ENCODE measurements at regions of chr3 and their contacts with region 1.

Region 1: DNA sequence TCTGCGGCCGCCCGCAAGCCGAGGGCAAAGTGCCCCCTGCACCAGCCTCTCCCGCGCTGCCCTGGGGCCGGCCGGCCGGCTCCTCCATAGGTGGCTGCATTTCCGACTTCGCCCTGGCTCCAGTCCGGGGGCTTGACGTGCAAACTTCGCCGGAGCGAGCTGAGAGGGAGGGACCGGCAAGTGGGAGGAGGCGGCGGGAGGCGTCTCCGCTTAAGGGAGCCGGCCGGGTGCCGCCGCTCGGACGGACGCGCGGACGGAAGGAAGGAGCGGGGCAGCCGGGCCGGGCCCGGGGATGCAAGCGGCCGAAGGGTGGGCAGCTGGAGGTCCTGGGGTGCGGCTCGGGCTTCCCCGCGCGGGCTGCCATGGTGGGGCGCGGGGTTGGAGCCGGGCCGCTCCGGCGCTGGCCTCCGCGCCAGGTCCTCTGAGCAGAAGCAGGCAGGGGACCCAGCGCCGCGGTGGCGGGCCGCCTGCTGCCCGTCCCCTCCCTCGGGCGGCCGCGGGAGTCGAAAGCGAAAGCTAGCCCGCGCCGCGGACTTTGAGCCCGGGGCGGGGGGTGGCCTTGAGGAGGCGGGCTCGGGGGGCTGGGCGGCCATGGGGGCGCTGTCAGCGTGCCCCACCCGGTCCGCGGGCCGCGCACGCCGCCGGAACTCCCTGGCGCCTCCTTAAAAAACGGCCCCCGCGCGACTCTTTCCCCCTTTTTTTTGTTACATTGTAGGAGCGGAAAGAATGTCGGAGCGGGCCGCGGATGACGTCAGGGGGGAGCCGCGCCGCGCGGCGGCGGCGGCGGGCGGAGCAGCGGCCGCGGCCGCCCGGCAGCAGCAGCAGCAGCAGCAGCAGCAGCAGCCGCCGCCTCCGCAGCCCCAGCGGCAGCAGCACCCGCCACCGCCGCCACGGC is at the start of gene SCAANT1:
- DNase-seq: peak; percentile 91 to 95
- H3K4me3 ChIP-seq: peak within 1 kb of the TSS; percentile 55
- H3K4me3 Mint-ChIP-seq: peak within 1 kb of the TSS; percentile 94
- H3K27ac Mint-ChIP-seq: peak within 1 kb of the TSS; percentile 90
- H3K4me1 ChIP-seq: peaks cover 10% of the 10 kb centered on the region
- H3K4me1 Mint-ChIP-seq: no peaks in the 10 kb centered on the region
- H3K27me3 ChIP-seq: no peaks in the 10 kb centered on the region
- H3K27me3 Mint-ChIP-seq: no peaks in the 10 kb centered on the region
- CTCF ChIP-seq: no peak
- total RNA-seq, gene SCAANT1: not detected in 2 replicates

Region 2: GRCh38 chr3:63863148-63864007 is 48.7 kb before region 1 on chr3 and contains the starts of genes ATXN7 and THOC7:
- CTCF ChIA-PET with region 1: interaction called, 15 read pairs
- POLR2A ChIA-PET with region 1: interaction called, 3 read pairs
- intact Hi-C with region 1: loop called (anchors 2 kb)
- DNase-seq: peak; percentile 63 to 81
- H3K4me3 ChIP-seq: peak within 1 kb of the TSS; percentile 93
- H3K4me3 Mint-ChIP-seq: peak within 1 kb of the TSS; percentile 73
- H3K27ac Mint-ChIP-seq: peak within 1 kb of the TSS; percentile 64
- H3K4me1 ChIP-seq: peaks cover 23% of the 10 kb centered on the region
- H3K4me1 Mint-ChIP-seq: peaks cover 28% of the 10 kb centered on the region
- H3K27me3 ChIP-seq: no peaks in the 10 kb centered on the region
- H3K27me3 Mint-ChIP-seq: no peaks in the 10 kb centered on the region
- CTCF ChIP-seq: no peak
- total RNA-seq, gene ATXN7: 22.5 and 22.8 TPM in 2 replicates
- total RNA-seq, gene THOC7: 68.4 and 78.3 TPM in 2 replicates

Region 3: DNA sequence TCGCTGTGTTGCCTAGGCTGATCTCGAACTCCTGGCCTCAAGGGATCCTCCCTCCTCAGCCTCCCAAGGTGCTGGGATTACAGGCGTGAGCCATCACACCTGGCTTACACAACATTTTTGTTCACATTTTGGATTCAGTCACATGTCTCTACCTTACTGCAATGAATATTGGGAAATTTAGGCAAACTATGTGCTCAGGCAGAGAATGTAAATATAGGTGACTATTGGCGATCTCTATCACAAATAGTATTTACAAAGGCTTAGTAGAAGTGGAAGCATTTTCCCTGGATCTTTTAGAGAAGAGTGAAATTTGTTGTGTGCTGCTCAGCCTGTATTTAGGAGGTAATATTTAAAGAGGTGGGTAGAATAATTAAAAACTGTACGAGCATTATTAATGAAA is 20.6 kb before region 1 on chr3:
- CTCF ChIA-PET with region 1: no interaction called
- POLR2A ChIA-PET with region 1: no interaction called
- intact Hi-C with region 1: loop called (anchors 1 kb)
- DNase-seq: peak in 1 of 2 experiments; percentile 36
- H3K4me3 ChIP-seq: no peak overlapping the region
- H3K4me3 Mint-ChIP-seq: no peak overlapping the region
- H3K27ac Mint-ChIP-seq: no peak overlapping the region
- H3K4me1 ChIP-seq: no peaks in the 10 kb centered on the region
- H3K4me1 Mint-ChIP-seq: no peaks in the 10 kb centered on the region
- H3K27me3 ChIP-seq: no peaks in the 10 kb centered on the region
- H3K27me3 Mint-ChIP-seq: no peaks in the 10 kb centered on the region
- CTCF ChIP-seq: no peak

Region 4: DNA sequence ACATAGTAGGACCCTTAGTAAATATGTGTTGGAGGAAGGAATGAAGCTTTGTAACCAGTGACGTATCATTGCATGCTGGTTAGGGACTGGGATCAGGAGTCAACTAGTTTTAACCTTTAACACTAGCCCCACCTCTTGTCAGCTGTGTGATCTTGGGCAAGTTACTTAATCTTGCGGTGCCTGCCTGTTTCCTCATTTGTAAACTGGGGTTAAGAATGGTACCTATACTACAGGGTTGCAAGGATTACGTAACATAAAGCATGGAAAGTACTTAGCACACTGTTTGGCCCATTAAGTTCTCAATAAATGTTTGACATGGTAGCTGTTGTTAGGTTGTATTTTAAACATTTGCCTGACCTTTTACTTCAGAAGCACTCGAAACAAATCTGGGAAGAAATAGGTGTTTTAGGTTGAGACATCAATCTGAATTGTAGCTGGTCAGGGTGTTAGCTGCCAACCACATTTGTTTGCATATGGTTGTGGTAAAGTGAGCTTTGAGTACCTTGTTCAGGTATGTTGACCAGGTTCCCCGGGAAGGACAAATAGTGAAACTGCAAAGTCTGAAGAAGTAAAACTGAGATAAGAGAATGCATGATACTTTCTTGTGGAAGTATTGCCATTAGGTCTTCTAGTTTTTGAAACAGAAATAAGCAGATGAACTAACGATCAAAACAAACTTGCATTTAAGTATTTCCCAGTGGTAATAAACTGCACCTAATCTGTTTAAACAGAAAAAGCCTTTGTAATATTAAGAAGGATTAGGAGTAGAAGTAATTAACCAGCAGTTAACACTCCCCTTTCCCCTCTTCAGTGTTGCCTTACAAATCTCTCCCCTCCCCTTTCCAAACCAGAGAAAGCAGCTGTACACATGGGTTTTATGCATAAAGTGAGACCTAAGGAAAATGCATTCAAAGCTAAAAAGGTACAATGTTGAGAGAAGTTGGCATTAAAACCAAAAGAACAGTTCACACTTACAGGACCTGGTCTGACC is 25.8 kb after region 1 on chr3:
- CTCF ChIA-PET with region 1: no interaction called
- POLR2A ChIA-PET with region 1: interaction called, 4 read pairs
- intact Hi-C with region 1: loop called (anchors 1 kb)
- DNase-seq: peak; percentile 48 to 50
- H3K4me3 ChIP-seq: no peak overlapping the region
- H3K4me3 Mint-ChIP-seq: peak overlapping the region; percentile 38
- H3K27ac Mint-ChIP-seq: peak overlapping the region; percentile 48
- H3K4me1 ChIP-seq: peaks cover 36% of the 10 kb centered on the region
- H3K4me1 Mint-ChIP-seq: peaks cover 36% of the 10 kb centered on the region
- H3K27me3 ChIP-seq: no peaks in the 10 kb centered on the region
- H3K27me3 Mint-ChIP-seq: no peaks in the 10 kb centered on the region
- CTCF ChIP-seq: no peak

Region 5: DNA sequence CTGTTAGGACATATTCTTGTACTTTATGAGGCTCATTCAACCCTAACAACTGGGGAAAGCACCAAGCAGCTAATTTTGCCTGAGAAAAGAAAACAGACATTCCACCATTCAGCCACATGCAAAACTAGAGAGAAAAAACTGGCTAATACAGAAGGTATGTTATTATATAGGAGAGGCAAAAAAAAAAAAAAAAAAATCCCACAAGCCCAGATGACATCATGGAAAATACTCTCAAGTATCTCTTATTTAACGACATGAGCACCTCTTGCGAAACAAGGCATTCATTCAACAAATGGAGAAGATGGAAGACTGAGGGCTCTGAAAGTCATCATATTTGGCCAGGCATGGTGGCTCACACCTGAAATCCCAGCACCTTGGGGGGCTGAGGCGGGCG is 251.6 kb after region 1 on chr3:
- CTCF ChIA-PET with region 1: no interaction called
- POLR2A ChIA-PET with region 1: no interaction called
- intact Hi-C with region 1: no loop called
- DNase-seq: peak in 1 of 2 experiments; percentile 22
- H3K4me3 ChIP-seq: no peak overlapping the region
- H3K4me3 Mint-ChIP-seq: peak overlapping the region; percentile 16
- H3K27ac Mint-ChIP-seq: peak overlapping the region; percentile 69
- H3K4me1 ChIP-seq: peaks cover 59% of the 10 kb centered on the region
- H3K4me1 Mint-ChIP-seq: peaks cover 21% of the 10 kb centered on the region
- H3K27me3 ChIP-seq: no peaks in the 10 kb centered on the region
- H3K27me3 Mint-ChIP-seq: no peaks in the 10 kb centered on the region
- CTCF ChIP-seq: no peak

Region 6: GRCh38 chr3:64257100-64257755 is 345.1 kb after region 1 on chr3:
- CTCF ChIA-PET with region 1: no interaction called
- POLR2A ChIA-PET with region 1: no interaction called
- intact Hi-C with region 1: no loop called
- DNase-seq: no peak
- H3K4me3 ChIP-seq: no peak overlapping the region
- H3K4me3 Mint-ChIP-seq: no peak overlapping the region
- H3K27ac Mint-ChIP-seq: no peak overlapping the region
- H3K4me1 ChIP-seq: peaks cover 45% of the 10 kb centered on the region
- H3K4me1 Mint-ChIP-seq: peaks cover 10% of the 10 kb centered on the region
- H3K27me3 ChIP-seq: no peaks in the 10 kb centered on the region
- H3K27me3 Mint-ChIP-seq: no peaks in the 10 kb centered on the region
- CTCF ChIP-seq: no peak